H1 (cell line): ENCODE measurements at regions of chr19 and their contacts with region 1.

Region 1: DNA sequence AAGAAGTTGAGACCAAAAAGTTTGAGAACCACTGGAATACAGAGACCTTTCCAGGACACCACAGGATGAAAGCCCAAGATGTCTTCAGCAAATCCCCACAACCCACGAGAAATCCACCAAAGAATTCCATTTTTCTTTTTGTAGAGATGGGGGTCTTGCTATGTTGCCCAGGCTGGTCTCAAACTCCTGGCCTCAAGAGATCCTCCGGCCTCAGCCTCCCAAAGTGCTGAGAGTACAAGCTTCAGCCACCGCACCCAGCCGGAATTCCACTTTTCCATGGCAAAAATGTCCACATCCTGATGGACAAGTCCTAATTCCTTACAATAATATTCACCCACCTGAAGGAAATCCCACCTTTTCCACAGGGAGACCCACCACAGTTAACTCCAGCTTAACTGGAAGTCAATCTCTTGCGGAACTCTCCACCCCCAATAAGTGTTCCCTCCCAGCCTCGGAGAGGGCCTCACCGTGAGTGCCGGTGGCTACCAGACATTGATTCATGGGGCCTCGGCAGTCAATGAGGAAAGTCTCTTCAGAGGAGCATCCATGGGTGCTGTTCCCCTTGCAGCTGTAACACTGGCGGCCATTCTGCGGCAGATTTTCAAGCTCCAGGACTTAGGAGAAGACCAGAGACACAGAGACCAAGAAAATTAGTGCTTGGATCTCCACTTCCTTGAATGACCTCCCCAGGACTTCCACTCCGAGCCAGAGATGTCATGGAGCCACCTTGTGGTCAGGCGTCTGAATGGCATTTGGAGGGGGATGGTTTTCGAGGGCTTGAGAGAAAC is 12.3 kb upstream of the CADM4 start:
- DNase-seq: peak in 1 of 2 experiments; percentile 80
- H3K4me3 ChIP-seq: no peak overlapping the region
- H3K27ac ChIP-seq: no peak overlapping the region
- H3K4me1 ChIP-seq: no peaks in the 10 kb centered on the region; a peak in 1 of 7 replicates
- H3K27me3 ChIP-seq: no peaks in the 10 kb centered on the region
- CTCF ChIP-seq: peak; percentile 84 to 92 (median 86)
- EP300 ChIP-seq: no peak
- POLR2A ChIP-seq: no peak
- RAD21 ChIP-seq: peak; percentile 81 to 87

Region 2: GRCh38 chr19:43641333-43641732 is 10.6 kb before region 1 on chr19:
- CTCF ChIA-PET with region 1: interaction called, 17 read pairs
- POLR2A ChIA-PET with region 1: interaction called, 3 read pairs
- DNase-seq: no peak
- H3K4me3 ChIP-seq: no peak overlapping the region
- H3K27ac ChIP-seq: no peak overlapping the region
- H3K4me1 ChIP-seq: peaks cover 3 to 14% (median 10%) of the 10 kb centered on the region in 4 experiments; a peak in 6 of 7 replicates
- H3K27me3 ChIP-seq: peaks cover 11 to 48% (median 29%) of the 10 kb centered on the region in 4 experiments
- CTCF ChIP-seq: no peak
- EP300 ChIP-seq: no peak
- POLR2A ChIP-seq: no peak
- RAD21 ChIP-seq: no peak

Region 3: GRCh38 chr19:43662487-43662886 is 10.5 kb after region 1 on chr19:
- CTCF ChIA-PET with region 1: interaction called, 28 read pairs
- POLR2A ChIA-PET with region 1: no interaction called
- DNase-seq: peak in 1 of 2 experiments; percentile 46
- H3K4me3 ChIP-seq: no peak overlapping the region
- H3K27ac ChIP-seq: no peak overlapping the region
- H3K4me1 ChIP-seq: peaks cover 0 to 6% (median 4%) of the 10 kb centered on the region in 4 experiments; a peak in 4 of 7 replicates
- H3K27me3 ChIP-seq: no peaks in the 10 kb centered on the region
- CTCF ChIP-seq: peak; percentile 27 to 57 (median 40)
- EP300 ChIP-seq: no peak
- POLR2A ChIP-seq: no peak
- RAD21 ChIP-seq: peak; percentile 28 to 41

Region 4: DNA sequence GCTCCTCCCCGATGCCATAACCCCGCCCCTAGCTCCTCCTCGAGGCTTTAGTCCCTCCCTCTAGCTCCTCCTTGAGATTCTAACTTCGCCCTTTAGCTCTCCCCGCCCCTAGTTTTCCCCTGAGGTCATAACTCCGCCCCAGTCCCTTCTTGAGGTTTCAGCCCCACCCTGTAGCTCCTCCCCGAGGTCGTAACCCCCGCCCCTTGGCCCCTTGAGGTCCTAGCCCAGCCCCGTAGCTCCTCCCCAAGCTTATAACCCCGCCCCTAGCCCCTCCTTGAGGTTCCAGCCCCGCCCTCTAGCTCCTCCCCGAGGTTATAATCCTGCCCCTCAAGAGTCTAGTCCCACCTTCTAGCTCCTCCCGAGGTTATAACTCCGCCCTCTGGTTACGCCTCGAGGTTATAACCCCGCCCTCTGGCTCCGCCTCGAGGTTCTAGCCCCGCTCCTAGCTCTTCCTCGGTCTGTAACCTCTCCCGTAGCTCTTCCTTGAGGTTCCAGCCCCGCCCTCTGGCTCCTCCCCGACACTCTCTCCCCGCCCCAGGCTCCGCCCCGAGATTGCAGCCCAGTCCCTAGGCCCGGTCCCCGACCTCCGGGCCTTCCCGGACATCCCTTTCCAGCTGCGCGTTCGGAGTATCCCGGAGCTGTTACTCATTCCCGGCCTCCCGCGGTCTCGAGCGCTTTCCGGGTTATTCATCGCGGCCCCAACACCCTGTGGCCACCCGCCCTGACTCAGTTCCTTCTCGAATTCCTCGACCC is 16.6 kb after region 1 on chr19:
- CTCF ChIA-PET with region 1: interaction called, 28 read pairs
- POLR2A ChIA-PET with region 1: interaction called, 3 read pairs
- DNase-seq: peak; percentile 99 to 100
- H3K4me3 ChIP-seq: peak overlapping the region; percentile 36 to 68 (median 45)
- H3K27ac ChIP-seq: peak overlapping the region; percentile 55; the same call in 1 of the 2 replicates
- H3K4me1 ChIP-seq: peaks cover 8 to 15% (median 9%) of the 10 kb centered on the region in 4 experiments
- H3K27me3 ChIP-seq: peaks cover 0 to 6% (median 2%) of the 10 kb centered on the region in 4 experiments; a peak in 3 of 7 replicates
- CTCF ChIP-seq: no peak; a peak in 1 of 4 replicates
- EP300 ChIP-seq: no peak
- POLR2A ChIP-seq: peak in 1 of 2 experiments; percentile 21; a peak in 1 of 3 replicates
- RAD21 ChIP-seq: no peak

Region 5: DNA sequence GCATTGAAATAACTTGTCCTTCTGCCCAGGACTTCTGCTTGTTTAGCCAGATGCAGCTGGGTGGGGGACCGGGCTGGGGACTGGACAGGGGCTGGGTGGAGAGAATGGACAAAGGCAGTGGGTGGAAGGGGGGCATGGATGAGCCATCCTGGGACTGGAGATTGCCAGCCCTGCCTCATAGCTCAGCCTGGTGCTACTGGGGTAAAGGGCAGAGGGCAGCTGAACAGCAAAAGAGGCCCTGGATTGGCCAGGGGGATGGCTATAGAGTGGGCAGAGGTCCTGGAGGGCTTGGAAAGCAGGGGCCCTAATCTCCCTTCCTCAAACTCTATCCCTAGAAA is 35.7 kb after region 1 on chr19:
- CTCF ChIA-PET with region 1: no interaction called
- POLR2A ChIA-PET with region 1: no interaction called
- DNase-seq: no peak
- H3K4me3 ChIP-seq: no peak overlapping the region
- H3K27ac ChIP-seq: no peak overlapping the region
- H3K4me1 ChIP-seq: peaks cover 0 to 2% (median 0%) of the 10 kb centered on the region in 4 experiments; a peak in 2 of 7 replicates
- H3K27me3 ChIP-seq: no peaks in the 10 kb centered on the region
- CTCF ChIP-seq: no peak
- EP300 ChIP-seq: no peak
- POLR2A ChIP-seq: no peak
- RAD21 ChIP-seq: no peak